ENCODE measurements at regions of chr2 and their contacts with region 1.

Region 1: DNA sequence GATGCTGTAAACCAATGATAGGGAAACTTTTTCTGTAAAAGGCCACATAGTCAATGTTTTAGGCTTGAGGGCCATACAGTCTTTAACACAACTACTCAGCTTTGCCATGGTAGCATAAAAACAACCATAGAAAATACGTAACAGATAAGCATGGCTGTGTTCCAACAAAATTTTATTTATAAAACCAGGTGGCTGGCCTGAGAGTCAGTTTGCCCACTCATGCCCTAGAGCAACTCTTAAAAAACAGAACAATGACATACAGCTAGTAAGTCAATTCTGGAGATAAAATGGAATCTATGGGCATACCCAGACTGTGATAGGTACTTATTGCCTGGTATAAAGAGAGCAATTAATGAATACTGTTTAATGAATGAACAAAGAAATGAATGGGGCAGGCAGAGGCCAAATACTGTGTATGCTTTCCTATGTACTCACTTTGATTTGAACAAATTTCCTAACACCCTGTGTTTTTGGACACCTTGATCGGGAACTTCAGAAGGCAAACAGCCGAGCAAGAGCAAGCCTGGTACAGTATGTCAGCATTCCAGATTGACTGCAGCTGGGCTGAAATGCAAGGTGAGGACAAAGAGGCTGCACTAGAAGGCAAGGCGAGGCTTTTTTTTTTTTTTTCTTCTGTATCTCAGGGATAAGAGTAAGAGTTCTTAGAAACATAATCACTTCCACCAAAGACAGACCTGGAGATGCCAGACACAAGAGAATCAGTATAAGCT is 315.3 kb downstream of the CLIP4 start:
- DNase-seq: no peak
- ATAC-seq: peak; percentile 24 to 67 (median 40)
- H3K4me3 ChIP-seq: no peak overlapping the region
- H3K27ac ChIP-seq: no peak overlapping the region
- H3K4me1 ChIP-seq: no peaks in the 10 kb centered on the region
- H3K27me3 ChIP-seq: peaks cover 0 to 3% (median 0%) of the 10 kb centered on the region in 9 donors
- CTCF ChIP-seq: no peak
- POLR2A ChIP-seq: no peak

Region 2: GRCh38 chr2:29260151-29260772 is 170.3 kb before region 1 on chr2:
- intact Hi-C with region 1: no loop called
- DNase-seq: no peak
- ATAC-seq: no peak
- H3K4me3 ChIP-seq: no peak overlapping the region
- H3K27ac ChIP-seq: no peak overlapping the region
- H3K4me1 ChIP-seq: no peaks in the 10 kb centered on the region
- H3K27me3 ChIP-seq: peaks cover 0 to 10% (median 0%) of the 10 kb centered on the region in 9 donors
- CTCF ChIP-seq: no peak
- POLR2A ChIP-seq: no peak

Region 3: DNA sequence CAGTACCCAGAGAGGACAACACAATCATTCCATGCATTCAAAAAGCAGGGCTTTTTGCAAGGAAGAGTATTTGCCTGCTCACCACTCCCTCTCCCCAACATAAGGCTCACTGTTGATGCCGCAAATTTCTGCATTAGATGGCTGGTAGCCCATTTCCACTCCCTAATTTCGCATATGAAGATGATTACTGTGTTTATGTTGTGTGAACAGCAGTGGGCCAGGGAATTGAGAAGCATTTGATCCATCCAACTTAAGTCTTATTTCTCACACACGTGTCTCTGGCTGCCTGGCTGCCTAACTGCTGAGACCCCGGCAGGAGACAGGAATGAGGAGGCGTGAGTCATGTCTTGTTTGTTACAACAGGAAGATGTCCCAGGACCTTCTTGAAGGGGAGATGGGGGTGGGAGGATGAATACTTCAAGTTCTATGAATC is 196.7 kb after region 1 on chr2:
- intact Hi-C with region 1: loop called in 1 of 10 experiments (anchors 5 kb)
- DNase-seq: no peak
- ATAC-seq: no peak
- H3K4me3 ChIP-seq: no peak overlapping the region
- H3K27ac ChIP-seq: no peak overlapping the region
- H3K4me1 ChIP-seq: peaks cover 0 to 9% (median 0%) of the 10 kb centered on the region in 12 donors
- H3K27me3 ChIP-seq: peaks cover 0 to 5% (median 0%) of the 10 kb centered on the region in 9 donors
- CTCF ChIP-seq: no peak
- POLR2A ChIP-seq: no peak

Region 4: GRCh38 chr2:29638641-29639040 is 208.1 kb after region 1 on chr2:
- intact Hi-C with region 1: no loop called
- DNase-seq: no peak
- ATAC-seq: no peak
- H3K4me3 ChIP-seq: no peak overlapping the region
- H3K27ac ChIP-seq: no peak overlapping the region
- H3K4me1 ChIP-seq: peaks cover 0 to 4% (median 0%) of the 10 kb centered on the region in 12 donors
- H3K27me3 ChIP-seq: no peaks in the 10 kb centered on the region
- CTCF ChIP-seq: no peak
- POLR2A ChIP-seq: no peak